ENCODE measurements at regions of chr1 and their contacts with region 1.

Region 1: GRCh38 chr1:157490467-157491165 is 61.7 kb downstream of the FCRL5 start:
- DNase-seq: peak; percentile 33 to 62 (median 52)
- H3K4me3 ChIP-seq: no peak overlapping the region
- H3K4me3 Mint-ChIP-seq: no peak overlapping the region
- H3K27ac ChIP-seq: no peak overlapping the region
- H3K27ac Mint-ChIP-seq: peak overlapping the region in 1 of 7 donors; percentile 13
- H3K4me1 ChIP-seq: no peaks in the 10 kb centered on the region
- H3K4me1 Mint-ChIP-seq: peaks cover 4% of the 10 kb centered on the region
- H3K27me3 ChIP-seq: no peaks in the 10 kb centered on the region
- H3K27me3 Mint-ChIP-seq: peaks cover 4 to 12% (median 6%) of the 10 kb centered on the region in 3 donors
- CTCF ChIP-seq: peak; percentile 74

Region 2: DNA sequence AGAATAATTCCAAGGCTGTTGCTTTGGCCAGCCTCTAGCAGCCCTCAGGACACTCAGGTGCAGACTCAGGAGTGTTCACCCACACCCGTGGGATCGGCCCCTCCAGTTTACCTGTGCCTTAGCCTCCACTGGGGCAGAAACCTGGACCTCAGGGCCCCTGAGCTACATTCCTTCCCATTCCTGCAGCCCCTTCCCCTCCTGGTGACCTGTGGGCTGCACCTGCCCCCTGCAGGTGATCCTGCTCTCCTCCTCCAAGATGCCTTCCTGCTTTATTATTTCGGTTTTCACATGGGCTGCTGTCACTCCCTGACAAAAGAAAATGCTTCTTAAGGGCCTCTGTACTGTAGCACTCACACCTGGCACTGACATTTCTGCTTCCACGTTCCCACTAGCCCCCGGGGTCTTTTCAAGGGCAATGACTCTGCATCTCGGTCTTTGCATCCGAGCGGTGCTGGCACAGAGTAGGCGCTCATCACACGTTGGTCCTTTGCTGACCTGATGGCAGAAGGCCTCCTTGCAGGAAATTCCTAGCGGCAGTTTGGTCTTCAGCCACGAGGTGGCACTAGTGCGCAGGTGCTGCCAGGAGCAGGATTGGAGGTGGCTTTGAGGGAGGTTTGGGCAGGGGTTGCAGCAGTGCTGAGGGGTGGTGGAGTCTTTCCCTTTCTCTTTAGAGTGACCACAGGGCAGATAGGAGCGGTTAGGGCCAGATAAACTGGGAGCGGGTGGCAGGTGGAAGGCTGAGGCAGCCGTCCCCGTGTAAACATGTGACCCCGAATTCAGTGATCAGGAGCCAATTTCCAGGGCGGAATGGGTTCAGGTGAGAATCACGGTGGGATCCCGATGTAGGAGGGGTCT is 327.1 kb before region 1 on chr1:
- intact Hi-C with region 1: loop called in 1 of 2 experiments (anchors 5 kb)
- DNase-seq: peak; percentile 44 to 64 (median 58)
- H3K4me3 ChIP-seq: no peak overlapping the region
- H3K4me3 Mint-ChIP-seq: peak overlapping the region in 1 of 2 donors; percentile 78
- H3K27ac ChIP-seq: no peak overlapping the region
- H3K27ac Mint-ChIP-seq: peak overlapping the region in 1 of 7 donors; percentile 61
- H3K4me1 ChIP-seq: no peaks in the 10 kb centered on the region
- H3K4me1 Mint-ChIP-seq: peaks cover 9% of the 10 kb centered on the region
- H3K27me3 ChIP-seq: no peaks in the 10 kb centered on the region
- H3K27me3 Mint-ChIP-seq: peaks cover 2 to 14% (median 3%) of the 10 kb centered on the region in 3 donors
- CTCF ChIP-seq: peak; percentile 92

Region 3: DNA sequence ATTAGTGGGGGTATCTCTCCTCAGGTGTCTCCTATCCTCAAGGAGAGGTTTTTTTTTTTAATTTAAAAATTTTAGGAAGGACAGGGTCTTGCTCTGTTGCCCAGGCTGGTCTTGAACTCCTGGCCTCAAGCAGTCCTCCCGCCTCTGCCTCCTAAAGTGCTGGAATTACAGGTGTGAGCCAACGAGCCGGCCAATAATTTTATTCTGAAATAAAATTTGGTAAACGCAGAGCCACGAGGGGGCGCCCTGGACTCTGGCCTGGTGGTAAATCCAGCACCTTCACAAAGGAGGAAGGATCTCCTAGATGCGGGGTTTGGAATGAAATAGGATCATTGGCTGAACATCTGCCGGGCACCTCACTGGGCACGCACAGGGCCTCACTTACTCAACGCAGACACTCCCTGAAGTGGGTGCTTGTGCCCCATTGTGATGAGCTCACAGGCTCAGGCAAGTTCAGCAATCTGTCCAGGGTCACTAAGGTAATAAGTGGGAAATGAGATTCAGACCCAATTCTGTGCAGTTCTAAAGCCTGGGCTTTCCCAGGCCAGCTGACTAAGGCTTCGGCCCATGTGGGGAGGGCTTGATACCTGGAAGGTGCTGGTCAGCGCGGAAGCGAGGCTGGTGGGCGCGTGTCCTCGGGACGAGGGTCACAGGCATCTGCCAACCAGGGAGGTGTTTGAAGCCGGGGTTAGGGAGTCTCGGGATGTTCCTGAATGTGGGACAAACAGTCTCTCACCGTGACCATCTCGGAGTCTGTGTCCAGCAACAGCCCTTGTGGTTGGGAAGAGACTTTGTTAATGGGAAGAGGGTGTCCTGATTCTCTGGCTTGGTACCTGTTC is 319.7 kb before region 1 on chr1:
- intact Hi-C with region 1: loop called (anchors 5 kb)
- DNase-seq: peak in 2 of 3 donors; percentile 35 to 46
- H3K4me3 ChIP-seq: no peak overlapping the region
- H3K4me3 Mint-ChIP-seq: no peak overlapping the region
- H3K27ac ChIP-seq: no peak overlapping the region
- H3K27ac Mint-ChIP-seq: no peak overlapping the region
- H3K4me1 ChIP-seq: no peaks in the 10 kb centered on the region
- H3K4me1 Mint-ChIP-seq: peaks cover 2% of the 10 kb centered on the region
- H3K27me3 ChIP-seq: peaks cover 0 to 6% of the 10 kb centered on the region in 2 donors
- H3K27me3 Mint-ChIP-seq: peaks cover 8 to 31% (median 9%) of the 10 kb centered on the region in 3 donors
- CTCF ChIP-seq: peak; percentile 76

Region 4: DNA sequence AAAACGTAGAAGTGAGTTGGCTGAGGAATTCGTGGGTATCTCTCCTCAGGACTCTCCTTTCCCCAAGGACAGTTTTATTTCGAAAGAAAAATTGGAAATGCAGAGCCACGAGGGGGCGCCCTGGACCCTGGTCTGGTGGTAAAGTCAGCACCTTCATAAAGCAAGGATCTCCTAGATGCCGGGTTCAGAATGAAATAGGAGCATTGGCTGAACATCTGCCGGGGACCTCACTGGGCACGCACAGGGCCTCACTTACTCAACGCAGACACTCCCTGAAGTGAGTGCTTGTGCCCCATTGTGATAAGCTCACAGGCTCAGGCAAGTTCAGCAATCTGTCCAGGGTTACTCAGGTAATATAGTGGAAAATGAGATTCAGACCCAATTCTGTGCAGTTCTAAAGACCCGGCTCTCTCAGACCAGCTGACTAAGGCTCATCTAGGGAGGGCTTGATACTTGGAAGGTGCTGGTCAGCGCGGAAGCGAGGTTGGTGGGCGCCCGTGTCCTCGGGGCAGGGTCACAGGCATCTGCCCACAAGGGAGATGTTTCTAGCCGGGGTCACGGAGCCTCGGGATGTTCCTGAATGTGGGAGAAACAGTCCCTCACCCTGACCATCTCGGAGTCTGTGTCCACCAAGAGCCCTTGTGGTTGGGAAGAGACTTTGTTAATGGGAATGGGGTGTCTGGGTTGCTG is 296.8 kb before region 1 on chr1:
- intact Hi-C with region 1: loop called (anchors 2 to 5 kb)
- DNase-seq: peak; percentile 20 to 36 (median 24)
- H3K4me3 ChIP-seq: no peak overlapping the region
- H3K4me3 Mint-ChIP-seq: peak overlapping the region in 1 of 2 donors; percentile 69
- H3K27ac ChIP-seq: no peak overlapping the region
- H3K27ac Mint-ChIP-seq: peak overlapping the region in 1 of 7 donors; percentile 50
- H3K4me1 ChIP-seq: peaks cover 0 to 4% of the 10 kb centered on the region in 2 donors
- H3K4me1 Mint-ChIP-seq: peaks cover 6% of the 10 kb centered on the region
- H3K27me3 ChIP-seq: peaks cover 27 to 32% of the 10 kb centered on the region in 2 donors
- H3K27me3 Mint-ChIP-seq: peaks cover 27 to 44% (median 29%) of the 10 kb centered on the region in 3 donors
- CTCF ChIP-seq: peak; percentile 73

Region 5: DNA sequence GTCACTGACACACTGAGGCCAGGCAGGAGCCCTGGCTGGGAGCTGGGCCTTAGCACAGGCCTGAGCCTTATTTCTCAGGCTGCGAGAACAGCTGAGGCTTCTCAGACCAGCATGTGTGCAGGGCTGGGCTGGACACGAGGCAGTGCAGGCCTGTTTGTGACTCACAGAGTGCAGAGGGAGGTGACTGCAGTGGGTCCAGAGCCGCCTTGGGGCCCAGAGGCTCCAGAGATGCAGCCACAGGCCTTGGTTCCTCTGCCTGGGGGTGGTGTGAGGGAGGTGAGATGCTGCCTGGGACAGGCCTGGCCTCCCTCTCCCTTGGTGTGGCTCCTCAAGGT is 291.2 kb before region 1 on chr1:
- intact Hi-C with region 1: loop called in 1 of 2 experiments (anchors 5 kb)
- DNase-seq: no peak
- H3K4me3 ChIP-seq: no peak overlapping the region
- H3K4me3 Mint-ChIP-seq: no peak overlapping the region
- H3K27ac ChIP-seq: no peak overlapping the region
- H3K27ac Mint-ChIP-seq: no peak overlapping the region
- H3K4me1 ChIP-seq: peaks cover 0 to 4% of the 10 kb centered on the region in 2 donors
- H3K4me1 Mint-ChIP-seq: peaks cover 4% of the 10 kb centered on the region
- H3K27me3 ChIP-seq: peaks cover 15 to 19% of the 10 kb centered on the region in 2 donors
- H3K27me3 Mint-ChIP-seq: peaks cover 20 to 40% (median 29%) of the 10 kb centered on the region in 3 donors
- CTCF ChIP-seq: no peak

Region 6: GRCh38 chr1:157380523-157380922 is 110.1 kb before region 1 on chr1:
- intact Hi-C with region 1: loop called (anchors 2 kb)
- DNase-seq: no peak
- H3K4me3 ChIP-seq: no peak overlapping the region
- H3K4me3 Mint-ChIP-seq: peak overlapping the region in 1 of 2 donors; percentile 54
- H3K27ac ChIP-seq: no peak overlapping the region
- H3K27ac Mint-ChIP-seq: no peak overlapping the region
- H3K4me1 ChIP-seq: peaks cover 8 to 10% of the 10 kb centered on the region in 2 donors
- H3K4me1 Mint-ChIP-seq: peaks cover 17% of the 10 kb centered on the region
- H3K27me3 ChIP-seq: no peaks in the 10 kb centered on the region
- H3K27me3 Mint-ChIP-seq: peaks cover 2 to 4% (median 3%) of the 10 kb centered on the region in 3 donors
- CTCF ChIP-seq: no peak

Measured in CD14-positive monocyte (primary cell).